ENCODE measurements at regions of chr5 and their contacts with region 1.

Region 1: GRCh38 chr5:80654391-80655230 is at the starts of genes DHFR and MSH3:
- DNase-seq: peak; percentile 93
- H3K4me3 Mint-ChIP-seq: peak within 1 kb of the TSS; percentile 96
- H3K27ac Mint-ChIP-seq: peak within 1 kb of the TSS; percentile 81
- H3K4me1 Mint-ChIP-seq: peaks cover 23% of the 10 kb centered on the region
- H3K27me3 Mint-ChIP-seq: no peaks in the 10 kb centered on the region
- CTCF ChIP-seq: no peak
- total RNA-seq, gene DHFR: 6.3 and 13.0 TPM in 2 replicates
- total RNA-seq, gene MSH3: 17.5 and 21.9 TPM in 2 replicates

Region 2: DNA sequence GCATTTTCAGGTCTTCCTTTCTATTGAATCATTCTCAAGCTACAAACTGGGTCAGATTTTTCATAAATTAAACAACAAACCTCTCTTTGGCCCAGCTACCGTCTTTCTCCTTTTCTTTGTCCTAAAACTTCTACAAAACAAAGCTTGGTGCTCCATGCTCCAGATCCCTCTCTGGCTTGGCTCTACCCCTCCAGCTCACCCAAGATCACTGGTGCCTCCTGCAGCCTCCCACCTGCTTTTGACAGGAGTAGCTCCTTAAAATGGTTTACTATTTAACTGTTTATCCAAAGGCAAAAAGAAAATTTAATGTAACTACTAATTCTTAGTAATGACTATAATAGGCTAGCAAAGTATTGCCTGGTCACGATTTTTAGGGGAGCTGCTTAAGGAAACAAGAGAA is 388.0 kb before region 1 on chr5:
- CTCF ChIA-PET with region 1: no interaction called
- POLR2A ChIA-PET with region 1: no interaction called
- intact Hi-C with region 1: no loop called
- DNase-seq: no peak
- H3K4me3 Mint-ChIP-seq: no peak overlapping the region
- H3K27ac Mint-ChIP-seq: no peak overlapping the region
- H3K4me1 Mint-ChIP-seq: no peaks in the 10 kb centered on the region
- H3K27me3 Mint-ChIP-seq: no peaks in the 10 kb centered on the region
- CTCF ChIP-seq: no peak

Region 3: DNA sequence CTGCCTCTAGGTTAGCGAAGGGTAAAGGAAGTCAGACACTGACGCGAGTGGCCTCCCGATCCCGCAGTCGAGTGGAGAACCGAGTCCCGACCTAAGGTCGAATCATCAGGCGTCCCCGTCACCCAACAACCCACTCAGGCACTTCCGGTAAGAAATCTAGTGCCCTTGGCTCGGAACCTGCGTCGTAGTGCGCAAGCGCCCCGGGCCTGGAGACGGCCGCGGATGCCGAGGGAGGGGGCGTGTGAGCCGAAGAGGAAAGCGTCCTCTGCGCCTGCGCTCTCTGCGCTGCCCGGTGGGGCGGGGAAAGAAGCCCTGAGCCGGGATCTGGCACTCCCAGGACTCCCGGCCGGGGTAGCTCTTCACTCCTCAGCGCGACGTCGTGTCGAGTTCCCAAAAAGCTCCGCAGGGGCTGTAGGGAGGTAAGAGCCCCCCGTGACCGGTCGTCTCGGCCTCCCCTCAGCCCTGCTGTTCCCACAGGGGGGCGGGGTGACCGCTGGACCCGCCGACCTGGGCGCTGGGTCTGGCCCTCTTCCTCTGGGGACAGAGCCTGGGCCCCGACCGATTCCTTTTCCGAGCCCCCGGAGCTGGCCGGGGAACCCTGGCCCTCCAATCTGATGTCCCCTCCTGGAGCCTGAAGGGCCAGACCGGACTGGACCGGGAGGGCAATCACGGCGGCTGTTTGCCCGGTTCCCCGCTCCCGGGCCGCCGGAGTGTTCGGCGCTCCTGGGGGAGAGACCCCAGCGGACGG is 246.7 kb before region 1 on chr5 and contains the start of gene ZFYVE16:
- CTCF ChIA-PET with region 1: no interaction called
- POLR2A ChIA-PET with region 1: interaction called, 5 read pairs
- intact Hi-C with region 1: loop called (anchors 10 kb)
- DNase-seq: peak; percentile 97
- H3K4me3 Mint-ChIP-seq: peak within 1 kb of the TSS; percentile 80
- H3K27ac Mint-ChIP-seq: peak within 1 kb of the TSS; percentile 98
- H3K4me1 Mint-ChIP-seq: peaks cover 19% of the 10 kb centered on the region
- H3K27me3 Mint-ChIP-seq: no peaks in the 10 kb centered on the region
- CTCF ChIP-seq: peak; percentile 38
- total RNA-seq, gene ZFYVE16: 34.8 and 36.9 TPM in 2 replicates

Region 4: DNA sequence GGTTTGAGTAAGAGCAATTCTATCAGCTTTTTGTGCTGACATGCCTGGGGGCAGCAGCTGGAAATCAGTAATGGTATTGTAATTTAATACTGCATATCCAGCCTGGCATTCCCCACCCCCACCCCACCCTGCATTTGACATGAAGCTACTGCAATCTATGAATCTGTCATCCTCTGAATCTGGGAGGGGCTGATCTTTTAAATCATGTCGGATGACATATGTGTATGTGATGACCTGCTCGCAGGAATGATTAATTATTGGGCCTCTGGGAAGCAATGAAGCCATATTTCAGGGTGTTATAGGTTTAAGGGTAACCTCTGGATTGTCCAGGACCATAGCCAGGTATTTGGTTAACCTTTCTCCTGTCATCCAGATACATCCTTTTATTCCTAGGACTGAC is 240.9 kb after region 1 on chr5:
- CTCF ChIA-PET with region 1: no interaction called
- POLR2A ChIA-PET with region 1: no interaction called
- intact Hi-C with region 1: no loop called
- DNase-seq: no peak
- H3K4me3 Mint-ChIP-seq: no peak overlapping the region
- H3K27ac Mint-ChIP-seq: no peak overlapping the region
- H3K4me1 Mint-ChIP-seq: no peaks in the 10 kb centered on the region
- H3K27me3 Mint-ChIP-seq: no peaks in the 10 kb centered on the region
- CTCF ChIP-seq: no peak